ENCODE measurements at regions of chr20 and their contacts with region 1.

Region 1: DNA sequence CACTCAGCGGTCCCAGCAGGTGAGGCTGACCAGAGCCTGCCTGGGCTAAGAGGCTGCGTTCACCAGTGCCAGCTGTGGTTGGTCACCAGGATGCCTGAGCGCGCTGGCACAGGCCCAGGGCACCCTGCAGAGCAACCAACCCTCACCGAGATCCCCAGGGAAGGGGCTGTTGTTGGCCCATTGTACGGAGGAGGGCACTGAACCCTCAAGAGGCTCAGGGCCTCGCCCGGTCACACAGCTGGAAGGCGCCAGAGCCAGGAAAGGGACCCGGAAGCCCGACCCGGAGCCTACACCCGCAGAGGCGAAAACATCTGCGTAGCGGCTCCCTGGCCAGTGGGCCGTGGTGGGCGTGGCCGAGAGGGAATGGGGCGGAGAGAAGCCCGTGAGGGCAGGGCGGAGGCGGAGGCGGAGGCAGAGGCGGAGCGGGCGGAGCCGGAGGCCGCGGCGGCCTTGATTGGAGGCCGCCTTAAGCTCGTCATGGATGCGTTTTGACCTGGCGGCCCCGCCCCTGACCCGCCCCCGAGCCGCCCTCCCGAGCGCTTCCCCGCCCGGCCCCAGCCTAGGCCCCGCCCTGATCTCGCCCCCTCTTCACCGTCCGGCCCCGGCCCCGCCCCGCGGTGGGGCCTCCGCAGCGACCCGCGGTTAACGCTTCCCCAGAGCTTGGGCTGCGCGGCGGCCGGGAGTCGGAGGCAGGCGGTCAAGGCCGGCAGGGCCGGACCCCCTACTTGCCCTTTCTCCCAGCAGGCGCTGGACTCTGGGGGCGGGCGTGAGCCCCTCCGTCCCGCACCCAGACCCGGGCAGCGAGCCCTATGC is 2.2 kb upstream of the MRGBP start:
- DNase-seq: peak; percentile 95
- H3K4me3 ChIP-seq: peak overlapping the region; percentile 64 to 74
- H3K27ac ChIP-seq: peak overlapping the region; percentile 71 to 88
- H3K4me1 ChIP-seq: peaks cover 22 to 23% of the 10 kb centered on the region in 2 experiments; a peak in 3 of 4 replicates
- H3K27me3 ChIP-seq: no peaks in the 10 kb centered on the region
- CTCF ChIP-seq: no peak
- EP300 ChIP-seq: no peak
- RAD21 ChIP-seq: no peak

Region 2: GRCh38 chr20:62409931-62410745 is 384.0 kb before region 1 on chr20:
- CTCF ChIA-PET with region 1: interaction called, 26 read pairs
- POLR2A ChIA-PET with region 1: no interaction called
- DNase-seq: peak; percentile 92
- H3K4me3 ChIP-seq: no peak overlapping the region; a peak in 1 of 4 replicates
- H3K27ac ChIP-seq: no peak overlapping the region; a peak in 1 of 4 replicates
- H3K4me1 ChIP-seq: peaks cover 0 to 44% of the 10 kb centered on the region in 2 experiments; a peak in 1 of 4 replicates
- H3K27me3 ChIP-seq: no peaks in the 10 kb centered on the region
- CTCF ChIP-seq: peak; percentile 64
- EP300 ChIP-seq: no peak
- RAD21 ChIP-seq: peak; percentile 70

Region 3: GRCh38 chr20:62623488-62624324 is 170.4 kb before region 1 on chr20:
- CTCF ChIA-PET with region 1: interaction called, 20 read pairs
- POLR2A ChIA-PET with region 1: no interaction called
- DNase-seq: peak; percentile 93
- H3K4me3 ChIP-seq: no peak overlapping the region
- H3K27ac ChIP-seq: peak overlapping the region in 1 of 2 experiments; percentile 61; a peak in 2 of 4 replicates
- H3K4me1 ChIP-seq: peaks cover 9 to 33% of the 10 kb centered on the region in 2 experiments; a peak in 3 of 4 replicates
- H3K27me3 ChIP-seq: no peaks in the 10 kb centered on the region
- CTCF ChIP-seq: no peak
- EP300 ChIP-seq: no peak
- RAD21 ChIP-seq: no peak

Region 4: GRCh38 chr20:62658593-62659178 is 135.4 kb before region 1 on chr20:
- CTCF ChIA-PET with region 1: interaction called, 162 read pairs
- POLR2A ChIA-PET with region 1: no interaction called
- DNase-seq: no peak
- H3K4me3 ChIP-seq: no peak overlapping the region
- H3K27ac ChIP-seq: peak overlapping the region in 1 of 2 experiments; percentile 2; a peak in 1 of 4 replicates
- H3K4me1 ChIP-seq: peaks cover 0 to 16% of the 10 kb centered on the region in 2 experiments; a peak in 1 of 4 replicates
- H3K27me3 ChIP-seq: no peaks in the 10 kb centered on the region
- CTCF ChIP-seq: no peak
- EP300 ChIP-seq: no peak
- RAD21 ChIP-seq: no peak

Region 5: GRCh38 chr20:62694868-62695267 is 99.2 kb before region 1 on chr20:
- CTCF ChIA-PET with region 1: interaction called, 20 read pairs
- POLR2A ChIA-PET with region 1: no interaction called
- DNase-seq: no peak
- H3K4me3 ChIP-seq: no peak overlapping the region
- H3K27ac ChIP-seq: no peak overlapping the region
- H3K4me1 ChIP-seq: peaks cover 0 to 16% of the 10 kb centered on the region in 2 experiments; a peak in 2 of 4 replicates
- H3K27me3 ChIP-seq: no peaks in the 10 kb centered on the region
- CTCF ChIP-seq: no peak
- EP300 ChIP-seq: no peak
- RAD21 ChIP-seq: no peak

Region 6: GRCh38 chr20:62760856-62761758 is 33.0 kb before region 1 on chr20:
- CTCF ChIA-PET with region 1: interaction called, 11 read pairs
- POLR2A ChIA-PET with region 1: no interaction called
- DNase-seq: no peak
- H3K4me3 ChIP-seq: no peak overlapping the region
- H3K27ac ChIP-seq: no peak overlapping the region; a peak in 1 of 4 replicates
- H3K4me1 ChIP-seq: peaks cover 0 to 5% of the 10 kb centered on the region in 2 experiments; a peak in 1 of 4 replicates
- H3K27me3 ChIP-seq: no peaks in the 10 kb centered on the region
- CTCF ChIP-seq: no peak
- EP300 ChIP-seq: no peak
- RAD21 ChIP-seq: no peak

Region 7: GRCh38 chr20:62815066-62815991 is 21.2 kb after region 1 on chr20:
- CTCF ChIA-PET with region 1: interaction called, 34 read pairs
- POLR2A ChIA-PET with region 1: interaction called, 3 read pairs
- DNase-seq: peak; percentile 52
- H3K4me3 ChIP-seq: no peak overlapping the region
- H3K27ac ChIP-seq: no peak overlapping the region
- H3K4me1 ChIP-seq: peaks cover 17 to 51% of the 10 kb centered on the region in 2 experiments; a peak in 3 of 4 replicates
- H3K27me3 ChIP-seq: no peaks in the 10 kb centered on the region
- CTCF ChIP-seq: no peak
- EP300 ChIP-seq: no peak
- RAD21 ChIP-seq: no peak